ENCODE measurements at regions of chr10 and their contacts with region 1.

Region 1: DNA sequence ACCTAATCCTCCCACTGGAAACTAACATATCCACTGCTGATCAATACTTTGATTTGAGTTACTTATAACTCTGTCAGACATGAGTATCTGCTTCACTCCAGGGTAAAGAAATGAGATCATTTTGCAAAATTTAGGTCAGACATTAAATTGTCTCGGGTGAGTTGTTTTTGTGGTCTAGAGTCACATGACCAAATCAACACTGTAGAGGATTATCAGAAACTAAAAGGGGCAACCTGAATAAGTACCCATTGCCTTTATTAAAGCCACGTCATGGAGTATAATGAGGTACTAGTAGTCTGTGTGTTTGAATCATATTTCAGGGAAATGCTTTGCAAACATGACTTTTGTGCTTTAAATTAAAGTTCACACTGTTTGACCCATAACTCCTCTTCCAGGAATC is 107.7 kb upstream of the ADO start:
- DNase-seq: peak in 1 of 35 experiments; percentile 25
- ATAC-seq: peak in 1 of 4 experiments; percentile 35
- H3K4me3 ChIP-seq: no peak overlapping the region
- H3K4me3 Mint-ChIP-seq: no peak overlapping the region
- H3K27ac ChIP-seq: no peak overlapping the region
- H3K27ac Mint-ChIP-seq: no peak overlapping the region
- H3K4me1 ChIP-seq: peaks cover 10 to 15% of the 10 kb centered on the region in 2 experiments
- H3K4me1 Mint-ChIP-seq: peaks cover 16 to 45% (median 39%) of the 10 kb centered on the region in 3 donors
- H3K27me3 ChIP-seq: no peaks in the 10 kb centered on the region
- H3K27me3 Mint-ChIP-seq: no peaks in the 10 kb centered on the region

Region 2: GRCh38 chr10:62671104-62671503 is 25.7 kb before region 1 on chr10:
- CTCF ChIA-PET with region 1: no interaction called
- POLR2A ChIA-PET with region 1: interaction called in 1 of 2 experiments, 14 read pairs
- DNase-seq: no peak
- ATAC-seq: no peak
- H3K4me3 ChIP-seq: no peak overlapping the region
- H3K4me3 Mint-ChIP-seq: no peak overlapping the region
- H3K27ac ChIP-seq: no peak overlapping the region
- H3K27ac Mint-ChIP-seq: no peak overlapping the region
- H3K4me1 ChIP-seq: peaks cover 0 to 10% of the 10 kb centered on the region in 2 experiments
- H3K4me1 Mint-ChIP-seq: peaks cover 3 to 12% (median 6%) of the 10 kb centered on the region in 3 donors
- H3K27me3 ChIP-seq: no peaks in the 10 kb centered on the region
- H3K27me3 Mint-ChIP-seq: no peaks in the 10 kb centered on the region